ENCODE measurements at regions of chr2 and their contacts with region 1.

Region 1: DNA sequence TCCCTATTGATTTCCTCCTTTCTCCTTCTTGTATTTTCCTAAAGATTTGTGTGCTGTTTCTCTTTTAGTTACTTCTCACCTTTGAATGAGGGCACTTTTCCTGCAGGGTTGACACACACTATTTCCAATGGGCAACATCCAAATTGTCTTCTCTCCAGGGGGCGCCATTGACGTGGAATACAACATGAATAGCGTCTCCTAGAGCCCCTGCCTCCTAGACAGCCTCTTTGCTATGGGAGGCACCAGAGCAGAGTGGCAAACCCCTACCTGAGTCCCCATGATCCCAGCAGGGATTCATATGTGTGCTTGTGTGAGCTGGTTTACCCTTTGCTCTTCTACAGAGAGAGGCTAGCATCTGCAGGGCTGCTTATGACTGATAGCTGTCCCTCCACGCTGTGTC is 61.3 kb upstream of the ITSN2 start:
- DNase-seq: peak; percentile 73
- ATAC-seq: peak; percentile 83
- H3K4me3 ChIP-seq: no peak overlapping the region
- H3K27ac ChIP-seq: no peak overlapping the region
- H3K4me1 ChIP-seq: no peaks in the 10 kb centered on the region
- H3K27me3 ChIP-seq: no peaks in the 10 kb centered on the region
- CTCF ChIP-seq: peak; percentile 82

Region 2: GRCh38 chr2:24527536-24527935 is 105.9 kb after region 1 on chr2:
- CTCF ChIA-PET with region 1: no interaction called
- POLR2A ChIA-PET with region 1: interaction called, 13 read pairs
- intact Hi-C with region 1: no loop called
- DNase-seq: no peak
- ATAC-seq: no peak
- H3K4me3 ChIP-seq: no peak overlapping the region
- H3K27ac ChIP-seq: no peak overlapping the region
- H3K4me1 ChIP-seq: no peaks in the 10 kb centered on the region
- H3K27me3 ChIP-seq: no peaks in the 10 kb centered on the region
- CTCF ChIP-seq: no peak

Region 3: DNA sequence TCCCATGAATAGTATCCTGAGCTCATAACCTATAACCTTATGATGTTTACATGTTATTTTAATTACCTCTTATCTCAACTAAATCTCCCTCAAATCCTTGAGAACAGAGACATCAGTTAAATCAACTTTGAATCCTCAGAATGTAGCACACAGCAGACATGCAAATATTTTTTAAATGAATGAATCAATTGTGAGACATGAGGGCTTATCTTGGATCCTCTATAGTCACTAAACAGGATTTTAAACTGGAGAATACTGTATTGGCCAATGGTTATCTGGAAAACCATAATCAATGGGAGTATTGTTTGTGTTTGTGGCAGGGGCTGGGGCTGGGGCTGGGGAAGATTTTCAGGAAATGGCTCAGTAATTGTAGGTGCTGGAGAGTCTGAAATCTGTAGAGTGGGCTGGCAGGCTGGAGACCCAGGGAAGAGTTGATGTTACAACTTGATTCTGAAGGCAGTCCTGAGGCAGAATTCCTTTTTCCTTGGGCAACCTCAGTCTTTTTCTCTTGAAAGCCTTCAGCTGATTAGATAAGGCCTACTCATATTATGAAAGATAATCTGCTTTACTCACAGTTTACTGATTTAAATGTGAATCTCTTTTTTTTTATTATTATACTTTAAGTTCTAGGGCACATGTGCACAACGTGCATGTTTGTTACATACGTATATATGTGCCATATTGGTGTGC is 175.7 kb after region 1 on chr2:
- CTCF ChIA-PET with region 1: no interaction called
- POLR2A ChIA-PET with region 1: no interaction called
- intact Hi-C with region 1: no loop called
- DNase-seq: no peak
- ATAC-seq: no peak
- H3K4me3 ChIP-seq: no peak overlapping the region
- H3K27ac ChIP-seq: no peak overlapping the region
- H3K4me1 ChIP-seq: no peaks in the 10 kb centered on the region
- H3K27me3 ChIP-seq: no peaks in the 10 kb centered on the region
- CTCF ChIP-seq: no peak